ENCODE measurements at regions of chr2 and their contacts with region 1.

Region 1: GRCh38 chr2:201158111-201158929 is 24.6 kb upstream of the CASP10 start:
- DNase-seq: peak; percentile 91
- H3K4me3 ChIP-seq: no peak overlapping the region
- H3K27ac ChIP-seq: peak overlapping the region; percentile 31 to 33
- H3K4me1 ChIP-seq: peaks cover 16% of the 10 kb centered on the region
- H3K27me3 ChIP-seq: no peaks in the 10 kb centered on the region
- CTCF ChIP-seq: peak; percentile 56 to 82 (median 76)
- POLR2A ChIP-seq: no peak

Region 2: DNA sequence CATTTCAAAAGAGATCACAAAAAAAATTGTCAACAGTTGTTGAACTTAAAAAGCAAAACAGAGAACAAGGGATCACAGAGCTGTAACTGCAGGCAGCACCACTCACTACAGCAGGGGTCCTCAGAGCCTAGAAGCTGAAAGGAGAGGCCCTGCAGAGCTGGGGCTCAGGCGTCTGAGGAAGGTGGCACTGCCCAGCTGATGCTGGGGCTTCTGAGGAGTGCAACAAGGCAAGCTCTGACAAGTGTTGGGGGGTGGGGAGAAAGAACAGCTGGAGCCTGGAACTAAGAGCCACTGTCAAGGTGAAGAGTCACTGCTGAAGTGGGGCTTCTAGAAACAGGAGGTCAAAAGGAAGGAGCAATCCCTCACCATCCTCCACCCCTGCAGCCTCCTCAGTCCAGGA is 1353.5 kb before region 1 on chr2:
- intact Hi-C with region 1: no loop called
- DNase-seq: no peak
- H3K4me3 ChIP-seq: no peak overlapping the region
- H3K27ac ChIP-seq: no peak overlapping the region
- H3K4me1 ChIP-seq: no peaks in the 10 kb centered on the region
- H3K27me3 ChIP-seq: no peaks in the 10 kb centered on the region
- CTCF ChIP-seq: no peak
- POLR2A ChIP-seq: no peak

Region 3: DNA sequence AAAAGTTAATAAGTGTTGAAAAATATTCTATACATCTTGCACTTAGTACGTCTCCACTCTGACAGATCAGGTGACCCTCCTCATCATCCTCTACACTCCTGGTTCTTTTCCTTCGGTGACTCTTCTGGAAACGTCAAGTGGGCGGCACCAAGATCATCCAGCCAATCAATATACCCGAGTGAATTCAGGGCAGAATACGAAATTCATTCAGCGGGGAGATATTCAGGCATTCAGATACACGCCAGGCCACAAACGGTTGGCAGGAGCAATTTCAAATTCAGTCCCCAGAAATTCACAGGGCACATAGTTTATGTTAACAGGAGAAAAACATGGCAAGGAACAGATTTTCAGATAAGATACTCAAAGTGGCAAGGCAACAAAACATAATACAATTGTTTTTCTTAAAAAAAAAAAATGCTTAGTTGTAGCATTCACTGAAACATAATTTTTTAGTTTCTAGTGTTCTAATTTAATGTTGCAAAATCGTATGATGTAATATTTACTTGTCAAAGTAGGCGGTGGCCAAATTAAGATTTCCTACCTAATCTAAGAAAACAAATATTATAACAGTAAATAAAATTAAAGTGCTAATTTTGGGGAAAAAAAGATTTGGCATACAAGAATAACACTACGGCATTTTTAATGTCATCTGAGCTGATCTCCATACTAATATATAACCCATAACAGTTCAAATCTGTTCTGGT is 298.1 kb before region 1 on chr2:
- intact Hi-C with region 1: no loop called
- DNase-seq: peak; percentile 46
- H3K4me3 ChIP-seq: no peak overlapping the region
- H3K27ac ChIP-seq: peak overlapping the region; percentile 51 to 100
- H3K4me1 ChIP-seq: peaks cover 18% of the 10 kb centered on the region
- H3K27me3 ChIP-seq: no peaks in the 10 kb centered on the region
- CTCF ChIP-seq: no peak
- POLR2A ChIP-seq: no peak

Region 4: GRCh38 chr2:200901459-200902072 is 256.8 kb before region 1 on chr2:
- intact Hi-C with region 1: loop called (anchors 10 kb)
- DNase-seq: peak; percentile 88
- H3K4me3 ChIP-seq: no peak overlapping the region
- H3K27ac ChIP-seq: no peak overlapping the region
- H3K4me1 ChIP-seq: no peaks in the 10 kb centered on the region
- H3K27me3 ChIP-seq: no peaks in the 10 kb centered on the region
- CTCF ChIP-seq: peak; percentile 73 to 81 (median 73)
- POLR2A ChIP-seq: no peak

Region 5: DNA sequence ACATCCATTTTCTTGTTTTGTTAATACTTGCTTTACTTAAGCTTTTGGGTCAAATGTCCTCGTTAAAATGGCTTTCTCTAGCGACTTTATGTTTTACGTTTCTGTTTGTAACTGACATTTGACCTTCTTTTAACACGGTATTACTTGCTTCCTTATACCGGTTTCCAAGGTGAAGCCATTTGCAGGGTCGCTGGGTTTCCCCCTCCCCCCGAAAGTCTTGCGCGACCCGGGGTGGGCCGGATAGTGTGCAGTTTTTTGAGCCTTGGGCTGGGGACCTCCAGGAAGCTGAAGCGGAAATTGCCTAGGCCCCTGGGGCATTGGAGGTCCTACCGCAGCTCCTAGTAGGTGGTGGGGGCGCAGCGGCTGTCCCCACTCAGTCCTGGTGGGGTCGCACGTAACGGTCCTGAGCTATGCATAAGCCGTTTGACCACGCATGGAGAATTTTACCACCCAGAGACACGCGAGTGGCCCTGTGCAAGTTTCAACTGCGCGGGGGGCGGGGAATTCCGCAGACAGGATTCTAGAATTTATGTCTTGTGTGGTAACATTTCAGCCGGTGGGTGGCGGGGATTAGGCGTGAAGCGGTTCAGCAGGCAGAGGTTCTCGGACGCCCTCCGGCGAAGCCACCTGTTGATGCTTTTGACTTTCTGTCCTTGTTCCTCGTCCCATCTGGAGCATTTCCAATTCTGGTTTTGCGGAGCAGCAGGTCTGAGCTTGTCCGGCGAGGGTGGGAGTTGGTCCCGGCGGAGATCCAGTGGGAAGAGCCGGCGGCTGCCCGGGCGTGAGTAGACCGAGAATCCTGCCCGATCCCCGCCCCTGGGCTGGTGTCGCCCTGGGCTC is 40.0 kb before region 1 on chr2:
- intact Hi-C with region 1: loop called (anchors 5 kb)
- DNase-seq: peak; percentile 95
- H3K4me3 ChIP-seq: peak overlapping the region; percentile 91 to 99
- H3K27ac ChIP-seq: peak overlapping the region; percentile 97 to 100
- H3K4me1 ChIP-seq: peaks cover 41% of the 10 kb centered on the region
- H3K27me3 ChIP-seq: no peaks in the 10 kb centered on the region
- CTCF ChIP-seq: peak; percentile 23 to 52 (median 40)
- POLR2A ChIP-seq: no peak